ENCODE measurements at regions of chr9 and their contacts with region 1.

Region 1: GRCh38 chr9:78035383-78035993 is 3.9 kb upstream of the GNAQ start:
- DNase-seq: no peak
- H3K4me3 ChIP-seq: peak overlapping the region in 1 of 2 donors; percentile 2
- H3K27ac ChIP-seq: peak overlapping the region; percentile 59
- H3K4me1 ChIP-seq: peaks cover 22% of the 10 kb centered on the region
- H3K27me3 ChIP-seq: no peaks in the 10 kb centered on the region
- CTCF ChIP-seq: peak; percentile 68 to 88 (median 78)
- POLR2A ChIP-seq: no peak

Region 2: GRCh38 chr9:77433675-77434445 is 601.6 kb before region 1 on chr9:
- intact Hi-C with region 1: loop called (anchors 10 kb)
- DNase-seq: no peak
- H3K4me3 ChIP-seq: no peak overlapping the region
- H3K27ac ChIP-seq: no peak overlapping the region
- H3K4me1 ChIP-seq: peaks cover 7% of the 10 kb centered on the region
- H3K27me3 ChIP-seq: no peaks in the 10 kb centered on the region
- CTCF ChIP-seq: peak; percentile 71 to 85 (median 81)
- POLR2A ChIP-seq: no peak

Region 3: DNA sequence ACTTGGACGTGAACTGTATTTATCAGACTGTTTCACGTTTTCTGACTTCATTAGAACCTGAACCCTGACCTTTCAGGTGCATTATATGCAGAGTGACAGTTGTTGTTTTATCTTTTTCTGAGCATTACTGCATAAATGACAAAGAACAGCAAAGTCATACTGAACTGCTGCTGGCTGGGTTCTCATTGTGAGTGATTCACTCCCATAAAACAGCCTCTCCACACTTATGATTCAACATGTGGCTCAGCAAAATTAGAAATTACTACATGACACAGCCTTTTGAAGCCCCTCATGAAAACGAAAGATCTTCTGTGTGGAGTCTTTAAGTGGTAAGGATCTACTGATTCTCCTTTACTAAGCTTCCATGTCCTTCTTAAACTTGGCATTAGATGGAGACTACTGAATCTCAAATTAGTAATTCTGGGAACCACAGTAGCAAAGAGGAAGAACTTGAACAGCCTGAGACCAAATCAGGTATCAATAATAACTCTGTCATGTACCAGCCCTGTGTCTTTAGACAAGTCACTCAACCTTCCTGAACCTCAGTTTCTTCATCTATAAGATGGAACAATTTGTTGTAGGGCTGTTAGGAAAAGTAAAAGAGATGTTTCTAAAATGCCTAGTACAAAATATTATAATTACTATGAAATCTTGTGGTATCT is 215.1 kb before region 1 on chr9:
- intact Hi-C with region 1: loop called (anchors 10 kb)
- DNase-seq: no peak
- H3K4me3 ChIP-seq: no peak overlapping the region
- H3K27ac ChIP-seq: peak overlapping the region; percentile 40
- H3K4me1 ChIP-seq: peaks cover 18% of the 10 kb centered on the region
- H3K27me3 ChIP-seq: no peaks in the 10 kb centered on the region
- CTCF ChIP-seq: no peak
- POLR2A ChIP-seq: no peak

Region 4: GRCh38 chr9:77977210-77977611 is 58.3 kb before region 1 on chr9:
- intact Hi-C with region 1: loop called (anchors 10 kb)
- DNase-seq: no peak
- H3K4me3 ChIP-seq: no peak overlapping the region
- H3K27ac ChIP-seq: no peak overlapping the region
- H3K4me1 ChIP-seq: peaks cover 67% of the 10 kb centered on the region
- H3K27me3 ChIP-seq: no peaks in the 10 kb centered on the region
- CTCF ChIP-seq: peak; percentile 4 to 16 (median 11)
- POLR2A ChIP-seq: no peak